ENCODE measurements at regions of chr2 and their contacts with region 1.

Region 1: DNA sequence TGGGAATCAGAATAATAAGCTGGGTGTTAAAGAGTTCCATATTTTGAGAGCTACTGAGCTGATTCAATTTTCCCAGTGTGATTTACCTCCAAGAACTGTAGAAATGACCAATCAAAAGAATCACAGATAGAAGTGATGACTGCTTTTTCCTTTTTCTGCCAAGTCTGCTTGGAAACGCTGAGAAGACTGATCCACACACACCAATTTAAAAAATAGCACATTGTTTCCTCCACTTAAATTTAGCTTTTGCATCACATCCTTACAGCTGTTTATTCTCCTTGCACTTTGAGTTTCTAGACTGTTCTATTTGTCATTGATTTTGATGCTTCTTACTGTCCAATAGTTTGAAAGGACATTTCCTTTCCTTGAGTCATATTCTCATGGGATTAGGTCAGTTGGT is 590.3 kb upstream of the CHAC2 start:
- DNase-seq: no peak
- ATAC-seq: no peak
- H3K4me3 ChIP-seq: no peak overlapping the region
- H3K27ac ChIP-seq: no peak overlapping the region
- H3K4me1 ChIP-seq: no peaks in the 10 kb centered on the region
- H3K27me3 ChIP-seq: no peaks in the 10 kb centered on the region
- CTCF ChIP-seq: no peak

Region 2: GRCh38 chr2:52510432-52510831 is 666.9 kb before region 1 on chr2:
- CTCF ChIA-PET with region 1: no interaction called
- POLR2A ChIA-PET with region 1: interaction called, 15 read pairs
- in situ Hi-C with region 1: no loop called
- intact Hi-C with region 1: no loop called
- DNase-seq: no peak
- ATAC-seq: no peak
- H3K4me3 ChIP-seq: no peak overlapping the region
- H3K27ac ChIP-seq: no peak overlapping the region
- H3K4me1 ChIP-seq: no peaks in the 10 kb centered on the region
- H3K27me3 ChIP-seq: no peaks in the 10 kb centered on the region
- CTCF ChIP-seq: no peak

Measured in Panc1 (cell line).